HCT116 (cell line): ENCODE measurements at regions of chr5 and their contacts with region 1.

Region 1: DNA sequence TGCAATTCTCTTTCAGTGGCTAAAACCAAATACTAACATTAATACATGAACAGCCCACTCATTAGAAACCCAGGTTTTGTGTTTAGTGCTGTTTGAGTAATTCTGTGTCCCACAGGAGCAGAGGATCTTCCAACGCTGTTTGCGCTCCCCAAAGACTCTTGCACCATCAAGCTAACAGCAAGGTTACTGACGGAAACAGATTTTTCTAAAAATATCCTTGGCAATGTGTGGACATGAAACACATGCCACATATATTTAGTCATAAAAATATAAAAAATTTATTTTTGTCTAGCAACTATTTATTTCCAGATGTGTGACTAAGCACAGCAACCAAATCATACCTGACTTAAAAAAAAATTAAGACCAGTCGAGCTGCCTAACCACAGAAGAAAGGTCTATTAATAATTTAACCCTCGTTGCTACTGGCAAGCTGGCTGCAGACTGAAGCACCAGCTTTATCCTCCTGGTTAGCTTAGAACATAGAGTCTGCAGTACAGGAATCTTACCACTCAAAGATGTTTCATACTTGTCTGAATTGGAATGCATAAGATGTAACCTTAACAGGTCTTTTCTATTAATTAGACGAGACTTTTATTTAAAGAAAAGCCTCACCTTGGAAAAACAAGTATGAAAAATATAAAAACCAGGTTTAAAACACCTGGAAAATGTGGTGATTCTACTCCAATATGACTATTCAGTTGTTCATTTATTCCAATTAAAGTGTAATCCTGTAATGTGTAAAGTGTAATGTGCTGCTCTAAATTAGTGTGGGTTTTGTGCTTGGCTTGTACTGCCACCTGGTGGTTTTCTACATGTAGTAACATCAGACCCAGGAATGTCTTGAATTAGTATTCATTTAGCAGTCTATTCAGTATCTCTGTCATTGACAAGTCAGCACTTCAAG is 272.5 kb downstream of the EPB41L4A start:
- DNase-seq: peak; percentile 73
- ATAC-seq: peak; percentile 95
- H3K4me3 ChIP-seq: no peak overlapping the region
- H3K27ac ChIP-seq: no peak overlapping the region
- H3K4me1 ChIP-seq: no peaks in the 10 kb centered on the region
- H3K27me3 ChIP-seq: peaks cover 5% of the 10 kb centered on the region; the same call in 1 of the 2 replicates
- CTCF ChIP-seq: peak; percentile 56 to 88 (median 87)
- POLR2A ChIP-seq: no peak
- RAD21 ChIP-seq: peak; percentile 94

Region 2: DNA sequence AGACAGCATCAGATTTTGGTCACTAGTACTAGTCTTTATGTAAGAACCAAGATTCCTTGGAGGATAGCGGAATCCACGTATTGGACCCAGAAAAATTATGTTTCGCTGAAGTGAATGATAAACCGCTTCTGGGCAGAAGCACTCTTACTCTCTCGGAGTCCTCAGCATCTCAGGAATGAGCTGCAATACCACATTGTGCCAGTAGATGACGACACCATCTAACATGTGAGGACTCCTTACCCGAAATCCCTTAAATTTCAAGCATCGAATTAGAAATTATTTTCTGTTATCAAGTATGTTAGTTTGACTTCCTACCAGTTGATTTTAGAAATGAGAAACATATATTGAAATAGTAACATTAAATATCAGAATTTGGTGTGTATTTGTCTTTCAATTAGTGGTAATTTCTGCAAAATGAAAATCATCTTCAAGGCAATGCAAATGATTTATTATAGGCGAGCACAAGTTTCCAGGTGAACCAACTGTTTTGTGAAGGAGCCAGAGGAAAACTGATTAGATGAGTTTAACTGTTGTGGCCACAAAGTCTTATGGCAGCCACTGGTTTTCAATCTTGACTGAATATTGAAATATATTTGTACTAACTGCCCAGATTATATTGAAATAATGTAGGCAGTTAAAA is 988.4 kb before region 1 on chr5:
- CTCF ChIA-PET with region 1: interaction called, 4 read pairs
- POLR2A ChIA-PET with region 1: no interaction called
- RAD21 ChIA-PET with region 1: no interaction called
- intact Hi-C with region 1: loop called (anchors 1 kb)
- DNase-seq: peak; percentile 69
- ATAC-seq: peak; percentile 88
- H3K4me3 ChIP-seq: no peak overlapping the region
- H3K27ac ChIP-seq: no peak overlapping the region
- H3K4me1 ChIP-seq: no peaks in the 10 kb centered on the region
- H3K27me3 ChIP-seq: no peaks in the 10 kb centered on the region
- CTCF ChIP-seq: peak; percentile 77 to 99 (median 99)
- POLR2A ChIP-seq: no peak
- RAD21 ChIP-seq: peak; percentile 95

Region 3: DNA sequence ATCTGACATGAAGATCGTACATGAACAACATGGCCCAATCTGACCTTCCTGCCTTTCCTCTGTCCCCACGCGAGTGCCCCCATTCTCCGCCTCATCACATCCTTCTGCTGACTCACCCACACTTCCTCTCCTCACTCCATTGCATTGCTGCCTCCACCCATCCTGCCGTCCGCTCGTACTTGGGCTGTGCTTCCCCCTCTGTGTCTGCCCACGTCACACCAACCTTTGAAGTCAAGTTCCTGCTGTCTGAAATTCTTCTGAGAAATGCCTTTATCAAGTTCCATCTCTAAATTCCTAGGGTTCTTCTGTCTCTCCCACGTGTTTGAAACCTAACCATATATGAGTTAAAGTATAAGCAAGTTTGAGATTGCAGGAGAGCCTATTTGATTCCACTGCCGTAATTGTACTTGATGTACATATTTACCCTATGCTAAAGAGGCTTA is 616.3 kb before region 1 on chr5:
- CTCF ChIA-PET with region 1: interaction called, 3 read pairs
- POLR2A ChIA-PET with region 1: no interaction called
- RAD21 ChIA-PET with region 1: no interaction called
- intact Hi-C with region 1: loop called (anchors 5 kb)
- DNase-seq: peak; percentile 61
- ATAC-seq: peak; percentile 97
- H3K4me3 ChIP-seq: peak overlapping the region; percentile 7 to 31
- H3K27ac ChIP-seq: peak overlapping the region; percentile 49
- H3K4me1 ChIP-seq: peaks cover 0 to 19% of the 10 kb centered on the region in 2 experiments; a peak in 3 of 4 replicates
- H3K27me3 ChIP-seq: no peaks in the 10 kb centered on the region
- CTCF ChIP-seq: no peak
- POLR2A ChIP-seq: peak; percentile 37
- RAD21 ChIP-seq: no peak

Region 4: DNA sequence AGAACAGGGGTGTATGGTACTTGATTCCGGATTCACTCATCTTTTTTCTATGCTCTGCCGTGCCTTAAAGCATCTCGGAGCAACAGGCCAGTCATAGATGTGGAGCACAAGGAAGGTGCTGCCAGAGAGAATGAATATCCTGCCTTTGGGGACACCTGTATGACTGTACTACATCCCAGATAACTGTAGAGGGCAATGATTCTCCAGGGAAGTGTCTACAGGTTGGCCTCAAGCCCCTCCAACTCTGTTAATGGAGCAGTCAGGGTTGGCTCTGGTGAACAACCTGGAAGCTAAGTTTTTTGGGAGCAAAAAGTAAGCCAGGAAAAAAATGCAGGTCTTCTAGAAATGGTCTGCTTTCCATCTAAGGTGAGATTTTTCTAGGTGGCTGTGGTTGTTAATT is 460.6 kb before region 1 on chr5:
- CTCF ChIA-PET with region 1: interaction called, 3 read pairs
- POLR2A ChIA-PET with region 1: no interaction called
- RAD21 ChIA-PET with region 1: no interaction called
- intact Hi-C with region 1: loop called (anchors 1 kb)
- DNase-seq: peak; percentile 16
- ATAC-seq: peak; percentile 74
- H3K4me3 ChIP-seq: no peak overlapping the region
- H3K27ac ChIP-seq: no peak overlapping the region
- H3K4me1 ChIP-seq: peaks cover 4 to 8% of the 10 kb centered on the region in 2 experiments; a peak in 3 of 4 replicates
- H3K27me3 ChIP-seq: no peaks in the 10 kb centered on the region
- CTCF ChIP-seq: peak; percentile 17 to 46 (median 33); a peak in 4 of 6 replicates
- POLR2A ChIP-seq: no peak
- RAD21 ChIP-seq: peak; percentile 56

Region 5: GRCh38 chr5:111834926-111835598 is 311.5 kb before region 1 on chr5:
- CTCF ChIA-PET with region 1: no interaction called
- POLR2A ChIA-PET with region 1: no interaction called
- RAD21 ChIA-PET with region 1: no interaction called
- intact Hi-C with region 1: loop called (anchors 1 kb)
- DNase-seq: no peak
- ATAC-seq: no peak
- H3K4me3 ChIP-seq: no peak overlapping the region
- H3K27ac ChIP-seq: no peak overlapping the region
- H3K4me1 ChIP-seq: peaks cover 0 to 6% of the 10 kb centered on the region in 2 experiments; a peak in 2 of 4 replicates
- H3K27me3 ChIP-seq: no peaks in the 10 kb centered on the region
- CTCF ChIP-seq: no peak; a peak in 1 of 6 replicates
- POLR2A ChIP-seq: no peak
- RAD21 ChIP-seq: peak; percentile 43

Region 6: GRCh38 chr5:112346411-112347044 is 200.0 kb after region 1 on chr5:
- CTCF ChIA-PET with region 1: no interaction called
- POLR2A ChIA-PET with region 1: no interaction called
- RAD21 ChIA-PET with region 1: no interaction called
- intact Hi-C with region 1: no loop called
- DNase-seq: no peak
- ATAC-seq: no peak
- H3K4me3 ChIP-seq: no peak overlapping the region
- H3K27ac ChIP-seq: no peak overlapping the region
- H3K4me1 ChIP-seq: no peaks in the 10 kb centered on the region
- H3K27me3 ChIP-seq: no peaks in the 10 kb centered on the region
- CTCF ChIP-seq: no peak
- POLR2A ChIP-seq: no peak
- RAD21 ChIP-seq: no peak